Transverse colon (tissue), 4 donors: ENCODE measurements at regions of chr18 and their contacts with region 1.

Region 1: DNA sequence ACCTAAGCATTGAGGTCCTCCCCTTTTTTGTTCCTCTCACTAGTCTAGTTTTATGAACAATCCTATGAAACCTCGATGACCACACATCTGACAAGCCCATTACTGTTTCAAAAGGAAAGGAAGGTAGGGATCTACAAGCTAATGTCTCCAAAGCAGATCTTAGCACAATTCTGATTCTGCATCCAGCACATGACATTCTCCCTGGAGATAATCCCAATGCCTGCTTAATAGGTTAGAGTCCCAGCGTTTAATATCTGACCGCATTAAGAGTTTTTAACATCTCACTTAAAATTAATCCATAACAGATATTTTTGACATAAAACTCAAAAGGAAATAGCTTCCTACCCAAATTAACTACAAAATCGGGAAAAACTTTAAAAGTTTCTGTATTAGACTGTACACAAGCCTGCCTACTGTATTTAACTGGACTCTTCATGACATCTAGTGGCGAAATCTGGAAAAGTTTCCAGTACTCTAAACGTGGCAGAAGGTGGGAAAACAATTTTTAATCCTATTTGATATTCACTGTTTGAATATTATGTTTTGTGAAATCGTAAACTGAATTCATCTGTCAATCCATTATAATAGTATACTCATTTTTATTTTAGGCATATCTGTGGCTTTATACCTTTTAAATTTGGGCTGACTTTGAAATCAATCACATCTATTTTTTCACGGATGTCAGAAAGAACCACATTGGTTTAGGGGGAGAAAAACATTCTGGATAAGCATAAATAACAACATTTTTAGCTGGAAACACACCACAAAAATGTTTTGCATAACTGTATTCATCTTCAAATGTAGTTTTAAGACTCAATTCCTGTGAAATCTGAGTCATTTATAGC is 62.4 kb downstream of the TXNL1 start:
- DNase-seq: no peak
- H3K4me3 ChIP-seq: no peak overlapping the region
- H3K27ac ChIP-seq: peak overlapping the region in 1 of 4 donors; percentile 51
- H3K4me1 ChIP-seq: peaks cover 0 to 12% (median 0%) of the 10 kb centered on the region in 4 donors
- H3K27me3 ChIP-seq: no peaks in the 10 kb centered on the region
- CTCF ChIP-seq: peak; percentile 55 to 77 (median 60)
- EP300 ChIP-seq: no peak
- POLR2A ChIP-seq: no peak

Region 2: GRCh38 chr18:55110436-55110835 is 1465.6 kb before region 1 on chr18:
- in situ Hi-C with region 1: no loop called
- intact Hi-C with region 1: loop called (anchors 10 kb)
- DNase-seq: no peak
- H3K4me3 ChIP-seq: no peak overlapping the region
- H3K27ac ChIP-seq: no peak overlapping the region
- H3K4me1 ChIP-seq: no peaks in the 10 kb centered on the region
- H3K27me3 ChIP-seq: no peaks in the 10 kb centered on the region
- CTCF ChIP-seq: no peak
- EP300 ChIP-seq: no peak
- POLR2A ChIP-seq: no peak

Region 3: DNA sequence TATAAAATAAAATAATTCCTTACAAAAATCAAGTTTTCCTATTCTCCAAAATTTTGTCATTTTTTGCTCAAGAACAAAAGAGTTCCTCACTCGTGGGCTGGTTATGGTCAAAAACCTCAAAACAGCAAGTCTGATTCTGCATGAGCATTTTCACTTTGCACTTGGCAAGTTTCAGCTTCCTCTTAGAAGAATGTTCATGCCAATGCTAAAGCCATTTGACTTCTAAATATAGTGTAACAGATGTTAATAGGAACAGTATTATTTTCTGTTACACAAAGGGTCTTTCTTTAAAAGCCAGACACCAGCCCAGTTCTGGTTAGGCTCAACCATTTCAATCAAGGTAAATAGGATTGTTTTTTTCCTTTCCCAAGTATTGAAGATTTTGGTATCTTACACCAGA is 1355.5 kb before region 1 on chr18:
- in situ Hi-C with region 1: loop called in 2 of 4 experiments (anchors 25 kb)
- intact Hi-C with region 1: no loop called
- DNase-seq: no peak
- H3K4me3 ChIP-seq: no peak overlapping the region
- H3K27ac ChIP-seq: no peak overlapping the region
- H3K4me1 ChIP-seq: no peaks in the 10 kb centered on the region
- H3K27me3 ChIP-seq: no peaks in the 10 kb centered on the region
- CTCF ChIP-seq: no peak
- EP300 ChIP-seq: no peak
- POLR2A ChIP-seq: no peak

Region 4: DNA sequence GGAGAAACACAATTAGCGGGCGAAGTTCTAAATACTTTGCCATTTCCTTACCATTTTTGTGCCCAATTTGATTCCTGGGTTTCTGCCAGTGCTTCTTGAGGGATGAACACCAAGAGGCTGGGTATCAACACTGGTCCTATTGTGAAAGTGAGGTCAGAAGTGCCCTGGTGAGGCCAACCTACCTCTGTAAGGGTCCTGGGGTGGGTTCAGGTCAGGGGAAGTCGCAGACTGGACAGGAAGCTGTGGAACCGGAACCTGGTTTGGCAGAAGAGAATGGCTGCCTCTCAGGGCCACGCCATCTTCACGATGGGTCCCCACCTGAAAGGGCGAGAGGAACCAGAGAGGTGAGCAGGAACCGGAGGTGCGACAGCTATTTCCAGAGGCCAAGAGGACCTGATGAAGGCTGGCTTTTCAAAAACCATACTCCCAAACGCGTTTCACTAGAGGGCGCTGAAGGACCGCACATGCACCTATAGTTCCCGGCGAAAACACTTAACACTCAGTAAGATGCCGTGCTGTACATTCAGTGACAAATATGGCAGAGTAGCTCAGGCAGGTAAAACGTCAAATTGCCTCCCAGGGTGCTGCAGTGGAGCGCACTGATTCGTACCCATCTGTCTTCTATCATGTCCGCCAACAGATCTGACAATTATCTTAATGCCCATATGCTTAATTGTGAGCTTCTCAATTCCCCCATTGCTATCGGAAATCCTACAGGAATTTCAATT is 1341.5 kb before region 1 on chr18:
- in situ Hi-C with region 1: loop called in 1 of 4 experiments (anchors 25 kb)
- intact Hi-C with region 1: loop called (anchors 5 kb)
- DNase-seq: peak; percentile 78
- H3K4me3 ChIP-seq: no peak overlapping the region
- H3K27ac ChIP-seq: peak overlapping the region; percentile 1 to 15 (median 2)
- H3K4me1 ChIP-seq: peaks cover 0 to 5% (median 0%) of the 10 kb centered on the region in 4 donors
- H3K27me3 ChIP-seq: no peaks in the 10 kb centered on the region
- CTCF ChIP-seq: peak; percentile 66 to 81 (median 70)
- EP300 ChIP-seq: no peak
- POLR2A ChIP-seq: no peak

Region 5: DNA sequence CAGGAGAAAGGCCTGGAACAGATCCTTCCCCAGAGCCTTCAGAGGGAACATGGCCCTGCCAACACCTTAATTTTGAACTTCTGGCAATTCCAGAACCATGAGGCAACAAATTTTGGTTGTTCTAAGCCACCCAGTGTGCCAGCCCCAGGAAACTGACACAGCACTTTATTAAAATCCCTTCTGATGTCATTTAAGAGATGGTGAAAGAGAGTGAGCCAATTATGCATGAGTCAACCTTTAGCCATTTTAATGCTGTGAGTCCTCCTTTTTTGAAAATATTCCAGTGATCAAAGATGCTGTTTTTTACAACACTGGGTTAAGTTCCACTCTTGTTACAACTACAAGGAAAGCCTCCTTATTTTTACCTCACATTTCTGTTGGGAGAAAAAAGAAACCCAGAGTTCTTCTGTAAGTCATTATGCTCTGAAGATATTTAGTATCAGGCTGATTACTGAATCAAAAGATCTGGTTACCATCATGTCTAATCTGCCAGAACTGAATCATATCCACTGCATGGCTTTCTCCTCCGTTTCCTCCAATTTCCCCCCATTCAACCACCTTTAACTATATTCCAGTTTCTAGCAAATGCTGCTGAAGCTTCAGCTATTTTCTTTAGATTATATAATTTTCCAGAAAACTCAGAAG is 173.0 kb before region 1 on chr18:
- in situ Hi-C with region 1: no loop called
- intact Hi-C with region 1: no loop called
- DNase-seq: no peak
- H3K4me3 ChIP-seq: no peak overlapping the region
- H3K27ac ChIP-seq: no peak overlapping the region
- H3K4me1 ChIP-seq: no peaks in the 10 kb centered on the region
- H3K27me3 ChIP-seq: no peaks in the 10 kb centered on the region
- CTCF ChIP-seq: no peak
- EP300 ChIP-seq: no peak
- POLR2A ChIP-seq: no peak

Region 6: DNA sequence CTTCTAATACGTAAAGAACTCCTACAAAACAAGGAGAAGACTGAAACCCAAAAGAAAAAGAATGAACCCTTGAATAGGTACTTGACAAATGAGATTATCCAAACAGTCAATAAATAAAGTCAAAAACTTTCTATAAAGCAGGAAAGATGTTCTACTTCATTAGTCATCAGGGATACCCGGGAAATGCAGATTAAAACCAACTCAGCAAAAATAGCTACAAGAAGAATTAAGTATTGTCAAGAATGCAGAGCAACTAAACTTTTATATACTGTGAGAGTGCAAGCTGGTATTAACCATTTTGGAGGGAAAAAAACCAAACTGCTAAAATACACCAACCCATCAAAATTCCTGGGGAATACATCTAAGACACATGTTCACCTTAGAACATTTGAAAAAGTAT is 52.0 kb after region 1 on chr18:
- in situ Hi-C with region 1: no loop called
- intact Hi-C with region 1: loop called (anchors 2 kb)
- DNase-seq: no peak
- H3K4me3 ChIP-seq: no peak overlapping the region
- H3K27ac ChIP-seq: no peak overlapping the region
- H3K4me1 ChIP-seq: peaks cover 0 to 55% (median 14%) of the 10 kb centered on the region in 4 donors
- H3K27me3 ChIP-seq: no peaks in the 10 kb centered on the region
- CTCF ChIP-seq: no peak
- EP300 ChIP-seq: no peak
- POLR2A ChIP-seq: no peak

Region 7: GRCh38 chr18:57107140-57107832 is 531.2 kb after region 1 on chr18:
- in situ Hi-C with region 1: no loop called
- intact Hi-C with region 1: no loop called
- DNase-seq: no peak
- H3K4me3 ChIP-seq: no peak overlapping the region
- H3K27ac ChIP-seq: no peak overlapping the region
- H3K4me1 ChIP-seq: no peaks in the 10 kb centered on the region
- H3K27me3 ChIP-seq: no peaks in the 10 kb centered on the region
- CTCF ChIP-seq: no peak
- EP300 ChIP-seq: no peak
- POLR2A ChIP-seq: no peak